PC-9 (cell line): ENCODE measurements at regions of chr7 and their contacts with region 1.

Region 1: GRCh38 chr7:22146961-22147512 is 201.3 kb upstream of the CDCA7L start:
- DNase-seq: no peak
- H3K4me3 ChIP-seq: no peak overlapping the region
- H3K27ac ChIP-seq: no peak overlapping the region
- H3K4me1 ChIP-seq: 0 out of 2 replicates have a peak, but pooled peaks cover 3% of the 10 kb centered on the region
- H3K27me3 ChIP-seq: no peaks in the 10 kb centered on the region
- CTCF ChIP-seq: no peak

Region 2: GRCh38 chr7:22051886-22052673 is 95.0 kb before region 1 on chr7:
- CTCF ChIA-PET with region 1: no interaction called
- POLR2A ChIA-PET with region 1: no interaction called
- intact Hi-C with region 1: no loop called
- DNase-seq: no peak
- H3K4me3 ChIP-seq: no peak overlapping the region
- H3K27ac ChIP-seq: no peak overlapping the region
- H3K4me1 ChIP-seq: no peaks in the 10 kb centered on the region
- H3K27me3 ChIP-seq: peaks cover 84% of the 10 kb centered on the region
- CTCF ChIP-seq: no peak

Region 3: GRCh38 chr7:22295402-22296264 is 148.6 kb after region 1 on chr7:
- CTCF ChIA-PET with region 1: no interaction called
- POLR2A ChIA-PET with region 1: interaction called, 11 read pairs
- intact Hi-C with region 1: no loop called
- DNase-seq: no peak
- H3K4me3 ChIP-seq: no peak overlapping the region
- H3K27ac ChIP-seq: no peak overlapping the region
- H3K4me1 ChIP-seq: no peaks in the 10 kb centered on the region
- H3K27me3 ChIP-seq: no peaks in the 10 kb centered on the region
- CTCF ChIP-seq: no peak

Region 4: GRCh38 chr7:22350466-22351328 is 203.7 kb after region 1 on chr7:
- CTCF ChIA-PET with region 1: no interaction called
- POLR2A ChIA-PET with region 1: no interaction called
- intact Hi-C with region 1: no loop called
- DNase-seq: peak; percentile 30 to 89
- H3K4me3 ChIP-seq: no peak overlapping the region
- H3K27ac ChIP-seq: peak overlapping the region; percentile 40
- H3K4me1 ChIP-seq: peaks cover 65% of the 10 kb centered on the region
- H3K27me3 ChIP-seq: no peaks in the 10 kb centered on the region
- CTCF ChIP-seq: no peak